CD4-positive, alpha-beta memory T cell (primary cell): ENCODE measurements at regions of chr17 and their contacts with region 1.

Region 1: GRCh38 chr17:39153599-39154051 is 2.2 kb upstream of the PLXDC1 start:
- DNase-seq: peak; percentile 87 to 93 (median 92)
- H3K4me3 ChIP-seq: peak overlapping the region; percentile 82 to 98
- H3K4me3 Mint-ChIP-seq: peak overlapping the region; percentile 96 to 100 (median 99)
- H3K27ac ChIP-seq: peak overlapping the region; percentile 66
- H3K27ac Mint-ChIP-seq: peak overlapping the region; percentile 93 to 100 (median 98)
- H3K4me1 ChIP-seq: peaks cover 33% of the 10 kb centered on the region
- H3K4me1 Mint-ChIP-seq: peaks cover 28 to 57% (median 43%) of the 10 kb centered on the region in 4 donors
- H3K27me3 ChIP-seq: no peaks in the 10 kb centered on the region
- H3K27me3 Mint-ChIP-seq: peaks cover 3 to 18% of the 10 kb centered on the region in 2 donors

Region 2: GRCh38 chr17:38799378-38800236 is 354.0 kb before region 1 on chr17 and contains the start of gene PIP4K2B:
- CTCF ChIA-PET with region 1: no interaction called
- POLR2A ChIA-PET with region 1: no interaction called
- intact Hi-C with region 1: loop called (anchors 1 kb)
- DNase-seq: peak; percentile 81 to 88 (median 83)
- H3K4me3 ChIP-seq: peak within 1 kb of the TSS; percentile 76 to 84
- H3K4me3 Mint-ChIP-seq: peak within 1 kb of the TSS; percentile 91 to 98 (median 94)
- H3K27ac ChIP-seq: peak within 1 kb of the TSS; percentile 76
- H3K27ac Mint-ChIP-seq: peak within 1 kb of the TSS; percentile 89 to 96 (median 93)
- H3K4me1 ChIP-seq: peaks cover 27% of the 10 kb centered on the region
- H3K4me1 Mint-ChIP-seq: peaks cover 30 to 46% (median 36%) of the 10 kb centered on the region in 4 donors
- H3K27me3 ChIP-seq: no peaks in the 10 kb centered on the region
- H3K27me3 Mint-ChIP-seq: no peaks in the 10 kb centered on the region
- total RNA-seq, gene PIP4K2B: 55.9 to 66.3 TPM

Region 3: GRCh38 chr17:38922538-38923297 is 230.9 kb before region 1 on chr17:
- CTCF ChIA-PET with region 1: interaction called, 19 read pairs
- POLR2A ChIA-PET with region 1: interaction called, 5 read pairs
- intact Hi-C with region 1: loop called (anchors 2 kb)
- DNase-seq: no peak
- H3K4me3 ChIP-seq: no peak overlapping the region
- H3K4me3 Mint-ChIP-seq: no peak overlapping the region
- H3K27ac ChIP-seq: no peak overlapping the region
- H3K27ac Mint-ChIP-seq: peak overlapping the region in 1 of 7 donors; percentile 17
- H3K4me1 ChIP-seq: peaks cover 19% of the 10 kb centered on the region
- H3K4me1 Mint-ChIP-seq: peaks cover 24 to 32% (median 29%) of the 10 kb centered on the region in 4 donors
- H3K27me3 ChIP-seq: no peaks in the 10 kb centered on the region
- H3K27me3 Mint-ChIP-seq: no peaks in the 10 kb centered on the region

Region 4: DNA sequence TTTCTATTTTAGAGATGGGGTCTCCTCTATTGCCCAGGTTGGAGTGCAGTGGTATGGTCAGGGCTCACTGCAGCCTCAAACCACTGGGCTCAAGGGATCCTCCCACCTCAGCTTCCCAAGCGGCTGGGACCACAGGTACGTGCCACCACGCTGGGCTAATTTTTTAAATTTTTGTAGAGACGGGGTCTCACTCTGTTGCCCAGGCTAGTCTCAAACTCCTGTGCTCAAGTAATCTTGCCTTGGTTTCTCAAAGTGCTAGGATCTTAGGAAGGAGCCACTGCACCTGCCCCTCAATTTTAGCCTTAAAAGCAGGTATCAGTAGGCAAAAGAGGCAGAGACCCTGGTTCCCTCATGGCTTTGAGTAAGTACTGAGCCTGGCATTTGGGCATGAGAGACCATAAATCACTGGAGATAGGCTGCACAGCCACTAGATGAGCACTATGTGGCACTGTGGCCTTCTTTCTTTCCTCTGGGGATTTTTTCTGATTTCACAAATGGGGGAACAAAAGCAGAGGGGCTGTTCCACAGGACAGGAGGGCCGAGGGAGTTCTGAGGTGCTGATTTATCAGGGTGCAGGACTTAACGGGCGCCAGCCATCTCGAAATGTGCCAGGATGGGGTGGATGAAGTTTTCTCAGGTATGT is 84.4 kb before region 1 on chr17:
- CTCF ChIA-PET with region 1: interaction called, 47 read pairs
- POLR2A ChIA-PET with region 1: interaction called, 15 read pairs
- intact Hi-C with region 1: loop called (anchors 1 kb)
- DNase-seq: peak in 4 of 5 donors; percentile 44 to 55 (median 52)
- H3K4me3 ChIP-seq: no peak overlapping the region
- H3K4me3 Mint-ChIP-seq: peak overlapping the region in 1 of 8 donors; percentile 3
- H3K27ac ChIP-seq: no peak overlapping the region
- H3K27ac Mint-ChIP-seq: peak overlapping the region in 4 of 7 donors; percentile 41 to 75 (median 54)
- H3K4me1 ChIP-seq: no peaks in the 10 kb centered on the region
- H3K4me1 Mint-ChIP-seq: peaks cover 4 to 9% (median 5%) of the 10 kb centered on the region in 4 donors
- H3K27me3 ChIP-seq: no peaks in the 10 kb centered on the region
- H3K27me3 Mint-ChIP-seq: peaks cover 0 to 2% of the 10 kb centered on the region in 2 donors

Region 5: DNA sequence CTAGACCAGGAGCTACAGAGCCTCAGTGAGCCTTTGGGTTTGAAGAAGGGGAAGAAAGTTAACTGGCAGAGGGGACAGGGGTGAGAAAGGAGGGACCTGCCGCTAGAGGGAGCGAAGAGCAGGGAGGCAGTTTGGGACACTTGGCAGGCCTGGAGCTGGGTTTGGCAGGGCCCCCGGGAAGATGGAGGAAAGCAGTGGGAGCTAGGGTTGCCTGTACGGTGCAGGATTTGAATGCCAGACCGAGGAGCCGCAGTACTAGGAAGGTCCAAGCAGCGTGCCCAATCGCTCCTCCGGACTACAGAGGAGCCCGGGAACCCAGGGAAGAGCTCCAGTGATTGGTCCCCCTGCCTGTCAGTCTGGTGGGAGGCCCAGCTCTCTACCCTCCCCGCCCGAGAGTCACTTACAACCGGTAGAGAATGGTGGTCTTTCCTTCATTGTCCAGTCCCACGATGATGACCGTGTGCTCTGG is 11.1 kb after region 1 on chr17:
- CTCF ChIA-PET with region 1: interaction called, 61 read pairs
- POLR2A ChIA-PET with region 1: interaction called, 35 read pairs
- intact Hi-C with region 1: loop called (anchors 1 kb)
- DNase-seq: peak; percentile 70 to 77 (median 75)
- H3K4me3 ChIP-seq: peak overlapping the region; percentile 61
- H3K4me3 Mint-ChIP-seq: peak overlapping the region; percentile 86 to 96 (median 90)
- H3K27ac ChIP-seq: peak overlapping the region; percentile 28
- H3K27ac Mint-ChIP-seq: peak overlapping the region in 5 of 7 donors; percentile 0 to 90 (median 54)
- H3K4me1 ChIP-seq: peaks cover 24% of the 10 kb centered on the region
- H3K4me1 Mint-ChIP-seq: peaks cover 8 to 29% (median 16%) of the 10 kb centered on the region in 4 donors
- H3K27me3 ChIP-seq: no peaks in the 10 kb centered on the region
- H3K27me3 Mint-ChIP-seq: peaks cover 14 to 17% of the 10 kb centered on the region in 2 donors

Region 6: GRCh38 chr17:39244600-39245570 is 91.3 kb after region 1 on chr17:
- CTCF ChIA-PET with region 1: interaction called, 18 read pairs
- POLR2A ChIA-PET with region 1: interaction called, 15 read pairs
- intact Hi-C with region 1: no loop called
- DNase-seq: peak; percentile 74 to 83 (median 78)
- H3K4me3 ChIP-seq: no peak overlapping the region
- H3K4me3 Mint-ChIP-seq: peak overlapping the region in 1 of 8 donors; percentile 57
- H3K27ac ChIP-seq: no peak overlapping the region
- H3K27ac Mint-ChIP-seq: peak overlapping the region in 5 of 7 donors; percentile 6 to 92 (median 44)
- H3K4me1 ChIP-seq: peaks cover 11% of the 10 kb centered on the region
- H3K4me1 Mint-ChIP-seq: peaks cover 5 to 14% (median 9%) of the 10 kb centered on the region in 4 donors
- H3K27me3 ChIP-seq: no peaks in the 10 kb centered on the region
- H3K27me3 Mint-ChIP-seq: peaks cover 2% of the 10 kb centered on the region in 2 donors